ENCODE measurements at regions of chr1 and their contacts with region 1.

Region 1: DNA sequence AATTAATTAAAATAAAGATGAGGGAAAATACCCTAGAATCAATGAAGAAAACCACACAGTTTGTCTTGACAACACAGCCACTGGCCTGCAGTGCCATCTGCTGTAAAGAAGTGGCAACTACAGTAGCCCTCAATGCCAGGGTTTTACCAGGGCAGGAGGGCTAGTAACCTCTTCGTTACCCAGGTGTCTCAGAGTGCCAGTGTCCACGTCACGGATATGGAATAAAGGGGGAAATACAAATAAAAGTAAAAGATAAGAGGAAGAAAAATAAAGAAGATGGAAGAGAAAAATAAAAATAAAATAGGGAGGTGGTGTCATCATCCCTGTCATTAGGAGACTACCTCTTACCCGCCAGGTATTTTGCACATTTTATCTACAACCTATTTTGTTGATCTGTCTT is 14.2 kb upstream of the SLC44A3 start:
- DNase-seq: peak; percentile 66
- H3K4me3 Mint-ChIP-seq: no peak overlapping the region
- H3K27ac Mint-ChIP-seq: no peak overlapping the region
- H3K4me1 Mint-ChIP-seq: peaks cover 13% of the 10 kb centered on the region
- H3K27me3 Mint-ChIP-seq: peaks cover 4% of the 10 kb centered on the region

Region 2: GRCh38 chr1:94061513-94062443 is 744.1 kb before region 1 on chr1:
- CTCF ChIA-PET with region 1: interaction called, 3 read pairs
- intact Hi-C with region 1: loop called (anchors 1 kb)
- DNase-seq: peak; percentile 60
- H3K4me3 Mint-ChIP-seq: no peak overlapping the region
- H3K27ac Mint-ChIP-seq: no peak overlapping the region
- H3K4me1 Mint-ChIP-seq: no peaks in the 10 kb centered on the region
- H3K27me3 Mint-ChIP-seq: peaks cover 7% of the 10 kb centered on the region

Region 3: DNA sequence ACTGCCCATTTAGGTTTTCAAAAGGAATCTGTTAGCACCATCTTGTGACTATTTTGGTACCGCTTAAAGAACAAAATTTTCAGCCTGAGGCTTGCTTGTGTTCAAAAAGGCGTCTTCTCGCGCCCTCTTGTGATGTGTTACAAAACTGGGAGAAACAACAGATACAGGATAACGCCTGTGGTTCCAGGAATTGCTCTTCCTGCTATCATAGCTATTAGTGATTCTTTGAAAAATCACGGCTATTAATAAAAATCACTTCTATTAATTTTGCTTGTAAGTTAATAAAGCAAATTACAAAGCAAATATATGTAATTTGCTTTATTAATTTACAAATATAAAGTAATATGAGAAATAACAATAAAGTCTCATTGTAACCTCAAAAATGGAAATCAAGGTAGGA is 470.0 kb before region 1 on chr1:
- CTCF ChIA-PET with region 1: no interaction called
- intact Hi-C with region 1: loop called (anchors 5 kb)
- DNase-seq: peak; percentile 67
- H3K4me3 Mint-ChIP-seq: no peak overlapping the region
- H3K27ac Mint-ChIP-seq: no peak overlapping the region
- H3K4me1 Mint-ChIP-seq: no peaks in the 10 kb centered on the region
- H3K27me3 Mint-ChIP-seq: peaks cover 4% of the 10 kb centered on the region

Region 4: GRCh38 chr1:94481473-94481933 is 324.4 kb before region 1 on chr1:
- CTCF ChIA-PET with region 1: interaction called, 56 read pairs
- intact Hi-C with region 1: loop called (anchors 1 kb)
- DNase-seq: peak; percentile 44
- H3K4me3 Mint-ChIP-seq: no peak overlapping the region
- H3K27ac Mint-ChIP-seq: no peak overlapping the region
- H3K4me1 Mint-ChIP-seq: no peaks in the 10 kb centered on the region
- H3K27me3 Mint-ChIP-seq: no peaks in the 10 kb centered on the region

Region 5: DNA sequence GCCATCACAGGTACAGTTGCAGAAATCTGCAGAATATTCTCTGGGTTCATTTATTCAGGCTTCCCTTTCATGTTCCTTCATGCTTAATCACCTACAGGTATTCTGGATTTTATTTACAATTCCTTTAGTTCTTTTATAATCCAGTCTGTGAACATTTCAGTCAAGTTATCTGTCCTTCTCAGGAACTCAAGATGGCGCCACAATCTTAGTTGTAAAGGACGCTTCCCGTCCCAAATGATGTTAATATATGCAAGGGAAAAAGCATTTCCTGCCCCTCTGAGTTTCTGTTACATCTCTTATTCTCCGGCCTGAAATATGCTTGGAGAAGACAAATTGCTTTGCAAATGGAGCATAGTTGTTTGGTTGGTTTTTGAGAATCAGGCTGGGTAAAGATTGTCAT is 283.6 kb before region 1 on chr1:
- CTCF ChIA-PET with region 1: interaction called, 8 read pairs
- intact Hi-C with region 1: loop called (anchors 1 kb)
- DNase-seq: peak; percentile 14
- H3K4me3 Mint-ChIP-seq: no peak overlapping the region
- H3K27ac Mint-ChIP-seq: no peak overlapping the region
- H3K4me1 Mint-ChIP-seq: no peaks in the 10 kb centered on the region
- H3K27me3 Mint-ChIP-seq: no peaks in the 10 kb centered on the region

Region 6: DNA sequence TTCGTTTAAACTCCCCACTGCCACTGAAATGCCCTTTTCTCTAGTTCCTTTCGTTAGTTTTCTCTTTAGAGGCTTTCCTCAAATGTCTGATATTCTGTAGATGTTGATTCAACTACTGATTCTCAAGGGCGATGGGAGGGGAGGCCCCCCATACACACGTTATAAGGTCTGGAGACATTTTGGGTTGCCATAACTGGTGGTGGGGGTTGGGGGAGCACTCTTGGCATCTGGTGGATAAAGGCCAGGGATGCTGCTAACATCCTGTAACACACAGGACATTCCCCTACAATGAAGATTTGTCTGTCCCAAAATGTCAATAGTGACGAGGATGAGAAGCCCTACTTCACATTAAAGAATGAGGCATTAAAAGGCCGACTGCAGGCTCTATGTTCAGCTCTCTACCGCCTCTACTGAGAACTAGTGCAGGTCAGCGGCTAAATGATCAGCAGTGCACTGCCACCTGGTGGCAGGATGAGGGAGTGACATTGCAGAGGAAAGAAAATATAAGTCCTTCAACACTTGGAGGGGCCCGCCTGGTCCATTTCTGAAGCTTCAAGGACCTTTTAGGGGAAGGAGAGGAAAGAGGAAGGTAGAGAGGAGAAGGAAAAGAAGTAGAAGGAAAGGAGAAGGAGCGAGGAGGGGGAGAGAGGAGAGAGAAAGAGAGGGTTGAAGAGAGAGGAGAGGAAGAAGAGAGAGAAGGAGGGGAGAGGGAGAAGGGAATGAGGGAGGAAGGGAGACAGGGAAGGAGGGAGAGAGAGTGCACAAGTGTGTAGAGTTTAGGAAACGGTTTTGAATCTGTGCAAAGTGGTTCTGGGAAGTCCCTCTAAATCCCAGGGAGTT is 237.4 kb after region 1 on chr1:
- CTCF ChIA-PET with region 1: interaction called, 3 read pairs
- intact Hi-C with region 1: loop called (anchors 1 kb)
- DNase-seq: peak; percentile 87
- H3K4me3 Mint-ChIP-seq: no peak overlapping the region
- H3K27ac Mint-ChIP-seq: no peak overlapping the region
- H3K4me1 Mint-ChIP-seq: no peaks in the 10 kb centered on the region
- H3K27me3 Mint-ChIP-seq: no peaks in the 10 kb centered on the region